ENCODE measurements at regions of chr16 and their contacts with region 1.

Region 1: GRCh38 chr16:68328151-68328859 is 17.5 kb downstream of the PRMT7 start:
- DNase-seq: peak; percentile 96
- H3K4me3 ChIP-seq: no peak overlapping the region
- H3K4me3 Mint-ChIP-seq: peak overlapping the region; percentile 65
- H3K27ac Mint-ChIP-seq: peak overlapping the region; percentile 96
- H3K4me1 ChIP-seq: peaks cover 78% of the 10 kb centered on the region
- H3K4me1 Mint-ChIP-seq: peaks cover 49% of the 10 kb centered on the region
- H3K27me3 ChIP-seq: no peaks in the 10 kb centered on the region
- H3K27me3 Mint-ChIP-seq: no peaks in the 10 kb centered on the region
- CTCF ChIP-seq: peak; percentile 96 to 98

Region 2: DNA sequence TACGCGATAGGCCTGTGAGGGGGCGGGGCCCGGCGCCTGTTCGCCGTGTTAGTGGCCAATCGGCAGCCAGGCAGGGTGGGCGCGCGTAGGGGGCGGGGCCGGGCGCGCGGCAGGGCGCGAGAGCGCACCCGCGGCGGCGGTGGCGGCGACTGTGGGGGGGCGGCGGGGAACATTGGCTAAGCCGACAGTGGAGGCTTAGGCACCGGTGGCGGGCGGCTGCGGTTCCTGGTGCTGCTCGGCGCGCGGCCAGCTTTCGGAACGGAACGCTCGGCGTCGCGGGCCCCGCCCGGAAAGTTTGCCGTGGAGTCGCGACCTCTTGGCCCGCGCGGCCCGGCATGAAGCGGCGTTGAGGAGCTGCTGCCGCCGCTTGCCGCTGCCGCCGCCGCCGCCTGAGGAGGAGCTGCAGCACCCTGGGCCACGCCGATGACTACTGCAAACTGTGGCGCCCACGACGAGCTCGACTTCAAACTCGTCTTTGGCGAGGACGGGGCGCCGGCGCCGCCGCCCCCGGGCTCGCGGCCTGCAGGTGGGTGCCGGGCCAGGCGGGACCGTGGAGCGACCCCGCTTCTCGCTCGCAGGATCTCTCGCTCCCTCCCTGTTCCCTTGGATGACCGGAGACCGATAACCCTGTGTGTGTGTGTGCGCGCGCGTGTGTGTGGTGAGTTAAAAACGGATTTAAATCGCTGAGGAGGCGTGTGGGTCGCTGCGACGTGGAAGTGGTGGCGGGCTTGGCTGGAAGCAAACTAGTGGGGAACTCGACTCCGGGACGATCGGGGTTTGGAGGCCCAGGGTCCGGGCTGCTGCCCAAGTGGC is 242.8 kb before region 1 on chr16 and contains the start of gene NFATC3:
- CTCF ChIA-PET with region 1: interaction called, 7 read pairs
- POLR2A ChIA-PET with region 1: no interaction called
- intact Hi-C with region 1: loop called (anchors 5 kb)
- DNase-seq: peak; percentile 99
- H3K4me3 ChIP-seq: peak within 1 kb of the TSS; percentile 87
- H3K4me3 Mint-ChIP-seq: peak within 1 kb of the TSS; percentile 71
- H3K27ac Mint-ChIP-seq: peak within 1 kb of the TSS; percentile 83
- H3K4me1 ChIP-seq: peaks cover 28% of the 10 kb centered on the region
- H3K4me1 Mint-ChIP-seq: peaks cover 38% of the 10 kb centered on the region
- H3K27me3 ChIP-seq: no peaks in the 10 kb centered on the region
- H3K27me3 Mint-ChIP-seq: no peaks in the 10 kb centered on the region
- CTCF ChIP-seq: no peak
- total RNA-seq, gene NFATC3: 40.0 and 43.9 TPM in 2 replicates

Region 3: DNA sequence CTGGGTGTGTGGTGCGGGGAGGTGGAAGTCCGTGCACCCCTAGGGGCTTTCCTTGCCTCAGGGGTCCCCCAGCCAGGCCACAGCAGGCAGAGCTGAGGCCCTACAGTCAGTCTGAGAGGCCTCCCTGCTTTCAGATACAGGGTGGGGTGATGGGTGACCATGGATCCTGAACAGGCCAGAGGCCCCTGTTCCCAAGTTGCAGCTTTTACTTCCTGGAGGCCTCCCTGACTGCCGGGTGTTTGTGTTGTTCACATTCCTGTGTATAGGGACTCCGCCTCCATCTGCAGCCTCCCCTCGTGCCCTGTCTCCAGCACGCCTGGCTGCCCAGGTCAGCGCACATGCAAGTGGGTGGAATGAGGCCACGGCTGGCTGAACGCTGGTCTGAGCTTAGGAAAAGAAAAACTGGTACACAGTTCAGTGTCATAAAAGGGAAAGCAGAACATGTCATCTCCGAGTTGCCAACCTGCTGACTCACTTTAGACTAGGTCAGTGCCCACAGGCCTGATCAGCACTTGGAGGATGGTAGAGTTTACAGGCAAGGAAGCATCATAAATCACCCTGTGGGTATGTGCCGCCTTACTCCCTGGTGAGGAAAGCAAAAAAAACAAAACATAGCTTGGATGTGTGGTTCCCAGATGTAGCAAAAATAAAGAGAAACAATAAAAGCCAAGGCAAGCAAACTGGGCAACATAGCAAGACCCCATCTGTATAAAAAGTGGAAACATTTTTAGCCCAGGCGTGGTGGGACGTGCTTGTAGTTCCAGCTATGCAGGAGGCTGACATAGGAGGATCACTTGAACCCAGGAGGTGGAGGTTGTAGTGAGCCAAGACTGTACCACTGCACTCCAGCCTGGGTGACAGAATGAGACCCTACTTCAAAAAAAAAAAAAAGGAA is 70.2 kb before region 1 on chr16:
- CTCF ChIA-PET with region 1: interaction called, 98 read pairs
- POLR2A ChIA-PET with region 1: interaction called, 3 read pairs
- intact Hi-C with region 1: loop called (anchors 1 kb)
- DNase-seq: peak; percentile 76 to 82
- H3K4me3 ChIP-seq: no peak overlapping the region
- H3K4me3 Mint-ChIP-seq: no peak overlapping the region
- H3K27ac Mint-ChIP-seq: peak overlapping the region; percentile 58
- H3K4me1 ChIP-seq: peaks cover 21% of the 10 kb centered on the region
- H3K4me1 Mint-ChIP-seq: peaks cover 27% of the 10 kb centered on the region
- H3K27me3 ChIP-seq: no peaks in the 10 kb centered on the region
- H3K27me3 Mint-ChIP-seq: no peaks in the 10 kb centered on the region
- CTCF ChIP-seq: no peak

Region 4: DNA sequence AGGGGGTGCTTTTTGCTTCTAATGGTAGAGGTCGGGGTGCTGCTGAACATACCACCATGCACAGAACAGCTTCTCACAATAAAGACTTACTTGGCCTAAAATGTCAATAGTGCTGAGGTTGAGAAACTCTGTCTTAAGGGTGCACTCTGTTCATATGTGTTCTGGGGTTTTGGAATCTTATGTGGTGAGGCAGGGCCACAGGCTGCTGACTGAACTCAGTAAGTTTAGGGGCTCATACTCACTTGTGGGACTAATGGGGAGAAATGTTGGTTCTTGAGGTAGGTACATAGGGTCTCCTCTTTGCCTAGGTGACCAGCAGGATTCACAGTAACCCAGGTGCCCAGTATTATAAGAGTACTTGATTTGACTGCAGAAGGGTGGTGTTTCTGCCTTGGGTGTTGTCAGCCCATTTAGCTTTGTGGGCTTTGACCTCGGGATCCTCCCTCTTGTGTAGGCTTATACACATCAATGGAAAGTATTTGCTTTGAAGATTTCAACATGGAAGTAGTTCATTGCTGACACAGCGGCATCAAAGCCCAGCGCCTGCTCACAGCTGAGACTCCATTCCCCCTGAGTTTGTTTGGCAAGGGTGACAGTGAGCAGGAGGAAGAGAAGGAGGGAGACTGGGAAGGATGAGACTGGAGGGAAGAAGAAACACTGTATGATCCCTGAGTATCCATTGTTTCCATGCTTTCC is 46.8 kb before region 1 on chr16:
- CTCF ChIA-PET with region 1: interaction called, 5 read pairs
- POLR2A ChIA-PET with region 1: interaction called, 3 read pairs
- intact Hi-C with region 1: loop called (anchors 1 kb)
- DNase-seq: peak; percentile 69 to 79
- H3K4me3 ChIP-seq: no peak overlapping the region
- H3K4me3 Mint-ChIP-seq: peak overlapping the region; percentile 29
- H3K27ac Mint-ChIP-seq: peak overlapping the region; percentile 58
- H3K4me1 ChIP-seq: peaks cover 34% of the 10 kb centered on the region
- H3K4me1 Mint-ChIP-seq: peaks cover 42% of the 10 kb centered on the region
- H3K27me3 ChIP-seq: no peaks in the 10 kb centered on the region
- H3K27me3 Mint-ChIP-seq: no peaks in the 10 kb centered on the region
- CTCF ChIP-seq: no peak

Region 5: GRCh38 chr16:68310761-68311511 is 17.4 kb before region 1 on chr16 and contains the starts of genes PRMT7 and SLC7A6OS:
- CTCF ChIA-PET with region 1: interaction called, 22 read pairs
- POLR2A ChIA-PET with region 1: interaction called, 56 read pairs
- intact Hi-C with region 1: loop called (anchors 1 kb)
- DNase-seq: peak; percentile 93 to 95
- H3K4me3 ChIP-seq: peak within 1 kb of the TSS; percentile 65
- H3K4me3 Mint-ChIP-seq: peak within 1 kb of the TSS; percentile 77
- H3K27ac Mint-ChIP-seq: peak within 1 kb of the TSS; percentile 89
- H3K4me1 ChIP-seq: peaks cover 35% of the 10 kb centered on the region
- H3K4me1 Mint-ChIP-seq: peaks cover 39% of the 10 kb centered on the region
- H3K27me3 ChIP-seq: no peaks in the 10 kb centered on the region
- H3K27me3 Mint-ChIP-seq: no peaks in the 10 kb centered on the region
- CTCF ChIP-seq: peak in 1 of 2 experiments; percentile 52
- total RNA-seq, gene PRMT7: 156 and 166 TPM in 2 replicates
- total RNA-seq, gene SLC7A6OS: 34.0 and 34.2 TPM in 2 replicates

Region 6: GRCh38 chr16:68416057-68417046 is 88.0 kb after region 1 on chr16:
- CTCF ChIA-PET with region 1: no interaction called
- POLR2A ChIA-PET with region 1: no interaction called
- intact Hi-C with region 1: no loop called
- DNase-seq: peak in 1 of 2 experiments; percentile 23
- H3K4me3 ChIP-seq: no peak overlapping the region
- H3K4me3 Mint-ChIP-seq: no peak overlapping the region
- H3K27ac Mint-ChIP-seq: no peak overlapping the region
- H3K4me1 ChIP-seq: no peaks in the 10 kb centered on the region
- H3K4me1 Mint-ChIP-seq: no peaks in the 10 kb centered on the region
- H3K27me3 ChIP-seq: no peaks in the 10 kb centered on the region
- H3K27me3 Mint-ChIP-seq: no peaks in the 10 kb centered on the region
- CTCF ChIP-seq: no peak